Activated CD4-positive, alpha-beta memory T cell treated with anti-CD3 and anti-CD28 coated beads, Interleukin-2, amount 10 ng/mL, durations not matched to agents 7 days and 5 days (primary cell): ENCODE measurements at regions of chr3 and their contacts with region 1.

Region 1: GRCh38 chr3:49916686-49917085 is 12.9 kb downstream of the MON1A start:
- DNase-seq: no peak
- H3K4me3 Mint-ChIP-seq: no peak overlapping the region
- H3K27ac Mint-ChIP-seq: no peak overlapping the region
- H3K4me1 Mint-ChIP-seq: peaks cover 1% of the 10 kb centered on the region
- H3K27me3 Mint-ChIP-seq: no peaks in the 10 kb centered on the region

Region 2: DNA sequence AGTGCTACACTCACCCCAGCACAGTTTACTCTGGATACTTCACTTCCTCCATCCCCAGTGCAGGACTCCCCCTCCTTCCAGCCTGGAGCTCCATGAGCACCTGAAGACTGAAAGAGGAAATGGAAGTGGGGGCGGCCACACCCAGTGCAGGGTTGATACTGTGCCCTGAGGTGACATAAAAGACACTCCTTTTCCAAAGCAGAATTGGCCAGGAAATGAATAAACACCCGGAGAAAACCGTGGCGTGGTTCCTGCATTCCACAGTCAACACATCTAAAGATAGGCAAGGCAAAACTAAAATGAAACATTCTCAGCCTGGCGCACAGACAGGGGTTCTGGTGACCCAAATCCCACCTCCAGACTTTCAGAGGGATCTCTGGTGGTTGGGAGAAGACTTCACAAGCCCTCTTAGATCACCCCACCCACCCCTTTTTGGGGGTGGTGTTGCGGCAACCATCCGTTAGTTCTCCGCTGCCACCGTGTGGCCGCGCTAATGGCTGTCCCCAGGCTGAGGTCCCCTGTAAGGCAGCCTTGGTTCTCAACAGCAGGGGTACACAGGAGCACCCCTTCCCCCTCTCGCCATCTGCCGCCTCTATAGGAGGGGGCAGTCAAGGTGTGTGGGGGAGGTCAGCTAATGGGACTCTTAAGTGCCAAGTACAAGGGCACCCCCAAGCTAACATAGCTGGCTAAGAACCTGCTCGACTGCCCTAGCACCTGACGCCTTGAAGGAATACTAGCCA is 10.5 kb before region 1 on chr3:
- CTCF ChIA-PET with region 1: interaction called, 12 read pairs
- POLR2A ChIA-PET with region 1: interaction called, 3 read pairs
- DNase-seq: peak; percentile 61
- H3K4me3 Mint-ChIP-seq: peak overlapping the region; percentile 56
- H3K27ac Mint-ChIP-seq: peak overlapping the region; percentile 82
- H3K4me1 Mint-ChIP-seq: peaks cover 31% of the 10 kb centered on the region
- H3K27me3 Mint-ChIP-seq: no peaks in the 10 kb centered on the region